ENCODE measurements at regions of chr7 and their contacts with region 1.

Region 1: GRCh38 chr7:151503902-151504714 is 15.6 kb downstream of the RHEB start:
- DNase-seq: no peak
- H3K4me3 Mint-ChIP-seq: no peak overlapping the region
- H3K27ac Mint-ChIP-seq: no peak overlapping the region
- H3K4me1 Mint-ChIP-seq: peaks cover 31% of the 10 kb centered on the region
- H3K27me3 Mint-ChIP-seq: no peaks in the 10 kb centered on the region

Region 2: GRCh38 chr7:151472644-151473380 is 31.3 kb before region 1 on chr7:
- CTCF ChIA-PET with region 1: no interaction called
- POLR2A ChIA-PET with region 1: no interaction called
- DNase-seq: no peak
- H3K4me3 Mint-ChIP-seq: no peak overlapping the region
- H3K27ac Mint-ChIP-seq: peak overlapping the region; percentile 72
- H3K4me1 Mint-ChIP-seq: peaks cover 58% of the 10 kb centered on the region
- H3K27me3 Mint-ChIP-seq: no peaks in the 10 kb centered on the region

Region 3: DNA sequence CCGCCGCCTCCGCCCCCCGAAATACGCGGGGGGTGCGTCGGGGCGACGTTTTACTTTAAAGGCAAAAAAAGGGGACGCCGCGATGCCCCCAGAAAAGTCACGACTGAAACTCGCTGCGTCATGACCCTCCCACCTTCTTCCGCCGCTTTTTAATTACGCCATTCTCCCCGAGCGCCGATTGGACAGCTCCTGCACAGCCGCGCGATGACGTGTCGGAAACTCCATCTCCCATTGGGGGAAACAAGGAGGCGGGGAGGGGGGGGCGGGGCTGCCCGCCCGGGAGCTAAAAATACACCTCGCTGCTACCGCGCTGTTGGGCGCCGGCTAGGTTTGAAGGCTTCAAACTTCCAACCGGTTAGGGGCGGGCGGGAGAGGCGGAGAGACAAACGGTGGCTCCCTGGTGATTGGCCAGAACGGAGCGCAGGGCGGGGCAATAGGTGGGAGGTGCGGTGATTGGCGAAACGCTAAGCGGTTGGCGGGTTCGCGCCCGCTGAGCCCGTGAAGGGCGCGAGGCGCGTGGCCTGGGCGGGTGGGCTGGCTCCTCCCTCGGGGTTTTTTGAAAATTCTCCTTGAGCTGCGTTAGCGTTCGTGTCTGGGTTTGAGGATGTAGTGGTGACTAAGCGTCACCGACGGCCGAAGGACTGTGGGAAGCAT is 15.8 kb after region 1 on chr7 and contains the start of gene RHEB:
- CTCF ChIA-PET with region 1: no interaction called
- POLR2A ChIA-PET with region 1: interaction called, 13 read pairs
- DNase-seq: peak; percentile 99
- H3K4me3 Mint-ChIP-seq: peak within 1 kb of the TSS; percentile 92
- H3K27ac Mint-ChIP-seq: peak within 1 kb of the TSS; percentile 100
- H3K4me1 Mint-ChIP-seq: peaks cover 42% of the 10 kb centered on the region
- H3K27me3 Mint-ChIP-seq: peaks cover 4% of the 10 kb centered on the region
- total RNA-seq, gene RHEB: 82.8 to 85.1 TPM

Region 4: GRCh38 chr7:151592868-151593486 is 88.9 kb after region 1 on chr7:
- CTCF ChIA-PET with region 1: no interaction called
- POLR2A ChIA-PET with region 1: no interaction called
- DNase-seq: no peak
- H3K4me3 Mint-ChIP-seq: no peak overlapping the region
- H3K27ac Mint-ChIP-seq: no peak overlapping the region
- H3K4me1 Mint-ChIP-seq: no peaks in the 10 kb centered on the region
- H3K27me3 Mint-ChIP-seq: no peaks in the 10 kb centered on the region